ENCODE measurements at regions of chr16 and their contacts with region 1.

Region 1: GRCh38 chr16:75203667-75204409 is 3.1 kb downstream of the CTRB2 start:
- DNase-seq: no peak
- H3K4me3 ChIP-seq: no peak overlapping the region
- H3K27ac ChIP-seq: no peak overlapping the region
- H3K4me1 ChIP-seq: peaks cover 10% of the 10 kb centered on the region
- CTCF ChIP-seq: no peak

Region 2: GRCh38 chr16:75218256-75219070 is 14.6 kb after region 1 on chr16 and contains the start of gene CTRB1:
- CTCF ChIA-PET with region 1: no interaction called
- POLR2A ChIA-PET with region 1: interaction called, 7 read pairs
- intact Hi-C with region 1: loop called (anchors 2 kb)
- DNase-seq: no peak
- H3K4me3 ChIP-seq: no peak within 1 kb of the TSS
- H3K27ac ChIP-seq: no peak within 1 kb of the TSS
- H3K4me1 ChIP-seq: no peaks in the 10 kb centered on the region
- CTCF ChIP-seq: no peak
- total RNA-seq, gene CTRB1: not detected in 2 replicates

Region 3: DNA sequence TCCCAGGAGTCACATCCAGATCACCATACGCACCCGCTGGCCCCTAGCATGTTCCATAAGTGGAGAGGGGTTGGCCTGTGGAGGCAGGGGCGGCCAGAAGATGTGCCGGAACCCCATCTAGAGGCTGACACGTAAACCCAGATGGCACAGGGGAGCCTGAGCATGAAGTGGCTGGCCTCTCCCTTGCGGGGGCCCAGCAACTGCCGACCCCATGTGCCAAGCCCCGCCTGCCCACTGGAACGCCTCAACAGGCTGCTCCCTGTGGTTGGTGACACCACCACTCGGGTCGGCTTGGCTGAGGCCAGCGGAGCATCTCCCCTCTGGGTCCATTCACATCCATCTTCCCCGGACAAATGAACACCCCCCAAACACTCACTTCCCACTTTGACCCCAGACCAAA is 38.1 kb after region 1 on chr16:
- CTCF ChIA-PET with region 1: no interaction called
- POLR2A ChIA-PET with region 1: no interaction called
- intact Hi-C with region 1: no loop called
- DNase-seq: no peak
- H3K4me3 ChIP-seq: no peak overlapping the region
- H3K27ac ChIP-seq: no peak overlapping the region
- H3K4me1 ChIP-seq: peaks cover 19% of the 10 kb centered on the region
- CTCF ChIP-seq: no peak

Region 4: DNA sequence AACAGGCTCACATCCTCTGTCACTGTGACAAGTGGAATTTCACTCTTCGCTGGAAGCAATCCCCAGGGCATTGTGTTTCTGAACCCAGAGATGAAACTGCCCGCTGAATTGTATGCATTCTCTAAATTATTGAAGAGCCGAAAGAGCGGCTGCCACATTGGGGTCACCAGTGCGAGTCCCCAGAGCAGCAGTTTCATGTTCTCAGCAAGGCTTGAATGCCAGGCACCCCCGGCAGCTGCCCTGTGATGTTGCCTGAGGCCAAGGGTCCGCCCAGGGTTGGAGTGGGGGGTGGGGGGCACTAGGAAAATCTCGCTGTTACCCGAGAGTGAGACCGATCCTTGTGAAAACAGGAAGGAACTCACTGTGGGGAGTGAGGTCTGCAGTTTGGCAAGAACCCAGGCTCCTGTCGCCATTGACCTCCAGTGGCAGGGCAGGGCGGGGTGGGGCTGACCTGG is 68.3 kb after region 1 on chr16:
- CTCF ChIA-PET with region 1: no interaction called
- POLR2A ChIA-PET with region 1: no interaction called
- intact Hi-C with region 1: no loop called
- DNase-seq: no peak
- H3K4me3 ChIP-seq: no peak overlapping the region
- H3K27ac ChIP-seq: no peak overlapping the region
- H3K4me1 ChIP-seq: no peaks in the 10 kb centered on the region
- CTCF ChIP-seq: no peak

Measured in OCI-LY7 (cell line).